Right ventricle myocardium inferior (tissue), 1 donor: ENCODE measurements at regions of chr1 and their contacts with region 1.

Region 1: GRCh38 chr1:104780470-104781078 is 1030.9 kb downstream of the AMY1C start:
- DNase-seq: no peak
- ATAC-seq: no peak

Region 2: DNA sequence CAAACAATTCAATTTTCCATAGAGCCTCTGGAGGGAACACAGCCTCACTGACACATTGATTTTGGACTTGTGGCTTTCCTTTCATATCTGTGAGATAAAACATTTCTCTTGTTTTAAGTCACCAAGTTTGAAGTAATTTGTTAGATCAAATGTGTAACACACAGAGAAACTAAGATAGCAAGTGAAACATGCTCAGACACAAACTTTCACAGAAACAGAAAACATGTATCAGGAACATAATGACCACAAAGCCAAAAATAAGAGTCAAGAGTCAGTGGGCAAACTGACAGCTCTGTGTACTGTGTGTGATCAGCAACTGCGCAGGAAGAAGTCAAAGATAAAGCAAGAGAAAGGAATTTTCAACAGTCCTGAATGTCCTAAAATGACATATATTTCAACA is 206.6 kb after region 1 on chr1:
- intact Hi-C with region 1: no loop called
- DNase-seq: no peak
- ATAC-seq: no peak

Region 3: DNA sequence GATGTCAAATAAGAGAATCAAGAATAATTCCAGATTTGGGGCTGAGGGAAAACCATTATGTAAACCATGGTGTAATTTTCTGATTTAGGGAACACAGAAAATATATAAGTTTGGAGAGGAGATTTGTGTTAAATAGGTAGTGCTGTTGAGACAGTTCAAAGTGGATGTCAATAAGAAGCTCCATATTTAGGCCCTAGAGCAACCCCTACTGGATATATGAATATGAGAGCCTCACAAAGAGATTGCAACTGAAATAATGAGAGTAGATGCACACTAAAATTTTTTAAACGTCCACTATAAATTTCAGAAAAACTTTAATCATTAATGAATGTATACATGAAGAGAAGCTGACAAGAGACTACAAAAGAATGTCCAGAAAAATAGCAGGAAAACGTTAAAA is 828.1 kb after region 1 on chr1:
- intact Hi-C with region 1: loop called (anchors 5 kb)
- DNase-seq: no peak
- ATAC-seq: no peak

Region 4: DNA sequence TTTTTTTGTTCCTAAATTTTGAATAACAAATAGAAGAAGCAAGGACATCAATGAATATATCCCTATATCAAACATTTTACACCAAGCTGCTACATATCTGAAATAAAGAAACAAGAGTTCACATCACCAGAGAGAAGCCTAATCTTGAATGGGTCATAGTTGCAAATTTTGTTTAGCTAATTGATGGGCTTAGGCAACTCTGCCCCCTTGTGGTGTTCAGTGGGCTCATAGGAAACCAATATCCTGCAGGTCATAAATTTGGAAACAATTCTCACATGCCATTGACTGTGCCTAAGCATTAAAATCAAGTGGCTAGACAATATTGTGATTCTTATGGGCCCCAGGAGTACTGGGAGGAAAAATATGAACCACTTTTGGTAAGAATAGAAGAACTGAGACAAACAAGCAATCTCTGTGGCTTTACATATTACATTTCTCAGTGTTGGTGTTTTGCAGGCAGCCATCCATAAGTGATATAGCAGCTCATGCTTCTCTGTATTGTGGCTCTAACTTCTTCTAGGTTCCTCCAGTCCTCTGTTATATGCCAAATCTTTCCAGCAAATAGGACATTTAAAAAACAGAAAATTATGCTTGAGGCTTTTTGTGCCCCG is 1013.1 kb after region 1 on chr1:
- intact Hi-C with region 1: loop called (anchors 5 kb)
- DNase-seq: no peak
- ATAC-seq: no peak